ENCODE measurements at regions of chrX and their contacts with region 1.

Region 1: GRCh38 chrX:63754860-63755582 is 30.0 kb downstream of the ARHGEF9 start:
- DNase-seq: peak; percentile 88 to 91
- H3K4me3 ChIP-seq: peak overlapping the region; percentile 70
- H3K4me3 Mint-ChIP-seq: peak overlapping the region; percentile 90
- H3K27ac Mint-ChIP-seq: peak overlapping the region; percentile 89
- H3K4me1 ChIP-seq: no peaks in the 10 kb centered on the region
- H3K4me1 Mint-ChIP-seq: peaks cover 6% of the 10 kb centered on the region
- H3K27me3 ChIP-seq: no peaks in the 10 kb centered on the region
- H3K27me3 Mint-ChIP-seq: peaks cover 8% of the 10 kb centered on the region
- CTCF ChIP-seq: no peak

Region 2: GRCh38 chrX:63560601-63561218 is 194.3 kb before region 1 on chrX:
- CTCF ChIA-PET with region 1: no interaction called
- POLR2A ChIA-PET with region 1: no interaction called
- intact Hi-C with region 1: loop called (anchors 5 kb)
- DNase-seq: peak; percentile 56 to 65
- H3K4me3 ChIP-seq: peak overlapping the region; percentile 64
- H3K4me3 Mint-ChIP-seq: peak overlapping the region; percentile 81
- H3K27ac Mint-ChIP-seq: peak overlapping the region; percentile 45
- H3K4me1 ChIP-seq: peaks cover 6% of the 10 kb centered on the region; the same call in 1 of the 2 replicates
- H3K4me1 Mint-ChIP-seq: peaks cover 6% of the 10 kb centered on the region
- H3K27me3 ChIP-seq: no peaks in the 10 kb centered on the region
- H3K27me3 Mint-ChIP-seq: no peaks in the 10 kb centered on the region
- CTCF ChIP-seq: no peak

Region 3: DNA sequence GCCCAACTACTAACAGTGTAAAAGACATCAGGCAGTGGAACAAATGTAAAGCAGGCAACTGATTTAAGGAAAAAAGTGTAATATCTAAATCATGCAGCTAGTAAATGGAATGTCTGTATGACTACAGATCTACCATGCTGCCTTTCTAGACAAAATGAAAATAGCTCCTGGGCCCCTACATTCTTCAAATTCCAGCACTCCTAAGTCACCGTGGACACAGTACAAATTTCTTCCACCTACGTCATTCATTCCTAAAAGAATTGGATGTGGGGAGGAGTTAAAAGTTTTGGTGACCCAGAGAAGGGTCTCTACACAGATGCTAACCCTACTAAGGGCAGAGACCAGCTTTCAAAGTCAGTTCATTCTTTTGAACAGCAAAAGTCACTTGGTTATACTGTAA is 167.2 kb after region 1 on chrX:
- CTCF ChIA-PET with region 1: no interaction called
- POLR2A ChIA-PET with region 1: no interaction called
- intact Hi-C with region 1: loop called (anchors 5 kb)
- DNase-seq: peak; percentile 36
- H3K4me3 ChIP-seq: no peak overlapping the region
- H3K4me3 Mint-ChIP-seq: no peak overlapping the region
- H3K27ac Mint-ChIP-seq: peak overlapping the region; percentile 75
- H3K4me1 ChIP-seq: peaks cover 25% of the 10 kb centered on the region
- H3K4me1 Mint-ChIP-seq: peaks cover 11% of the 10 kb centered on the region
- H3K27me3 ChIP-seq: no peaks in the 10 kb centered on the region
- H3K27me3 Mint-ChIP-seq: no peaks in the 10 kb centered on the region
- CTCF ChIP-seq: no peak

Region 4: GRCh38 chrX:63967541-63967940 is 212.5 kb after region 1 on chrX:
- CTCF ChIA-PET with region 1: no interaction called
- POLR2A ChIA-PET with region 1: no interaction called
- intact Hi-C with region 1: no loop called
- DNase-seq: no peak
- H3K4me3 ChIP-seq: no peak overlapping the region
- H3K4me3 Mint-ChIP-seq: no peak overlapping the region
- H3K27ac Mint-ChIP-seq: no peak overlapping the region
- H3K4me1 ChIP-seq: no peaks in the 10 kb centered on the region
- H3K4me1 Mint-ChIP-seq: peaks cover 6% of the 10 kb centered on the region
- H3K27me3 ChIP-seq: no peaks in the 10 kb centered on the region
- H3K27me3 Mint-ChIP-seq: no peaks in the 10 kb centered on the region
- CTCF ChIP-seq: no peak

Region 5: GRCh38 chrX:64186974-64187761 is 432.1 kb after region 1 on chrX:
- CTCF ChIA-PET with region 1: no interaction called
- POLR2A ChIA-PET with region 1: no interaction called
- intact Hi-C with region 1: loop called (anchors 10 kb)
- DNase-seq: no peak
- H3K4me3 ChIP-seq: no peak overlapping the region
- H3K4me3 Mint-ChIP-seq: no peak overlapping the region
- H3K27ac Mint-ChIP-seq: no peak overlapping the region
- H3K4me1 ChIP-seq: peaks cover 7% of the 10 kb centered on the region
- H3K4me1 Mint-ChIP-seq: no peaks in the 10 kb centered on the region
- H3K27me3 ChIP-seq: no peaks in the 10 kb centered on the region
- H3K27me3 Mint-ChIP-seq: no peaks in the 10 kb centered on the region
- CTCF ChIP-seq: no peak